ENCODE measurements at regions of chr14 and their contacts with region 1.

Region 1: DNA sequence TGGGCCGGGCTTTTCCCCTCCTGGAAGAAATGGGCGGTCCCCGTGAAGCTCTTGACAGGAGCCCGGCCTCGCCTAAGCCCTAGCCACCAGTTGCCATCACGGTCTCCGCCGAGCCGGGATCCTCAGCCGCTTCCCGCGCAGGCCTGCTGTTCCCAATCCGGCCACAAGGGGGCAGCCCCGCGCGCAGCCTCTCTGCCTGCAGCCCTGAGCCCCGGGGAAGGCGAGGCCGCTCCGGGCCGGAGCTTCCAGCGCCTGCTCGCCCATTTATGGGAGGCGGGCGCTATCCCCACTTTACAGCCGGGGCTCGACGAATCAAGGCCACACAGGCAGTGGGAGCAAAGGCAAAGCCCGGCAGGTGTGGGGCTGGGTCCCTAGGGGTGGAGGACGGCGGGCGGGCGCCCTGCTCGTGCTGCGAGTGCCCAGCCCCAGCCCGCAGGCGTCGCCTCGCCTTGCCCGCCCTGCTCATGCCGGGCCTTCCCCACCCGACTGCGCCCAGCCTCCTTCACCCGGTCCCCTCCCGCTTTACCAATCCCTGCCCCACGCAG is 61.5 kb downstream of the LGMN start:
- DNase-seq: no peak
- H3K4me3 ChIP-seq: peak overlapping the region; percentile 30; the same call in 1 of the 2 replicates
- CTCF ChIP-seq: peak; percentile 99

Region 2: GRCh38 chr14:92135267-92135666 is 551.7 kb before region 1 on chr14:
- CTCF ChIA-PET with region 1: interaction called, 27 read pairs
- POLR2A ChIA-PET with region 1: no interaction called
- DNase-seq: no peak
- H3K4me3 ChIP-seq: no peak overlapping the region
- CTCF ChIP-seq: peak; percentile 33

Region 3: GRCh38 chr14:92563359-92563758 is 123.6 kb before region 1 on chr14:
- CTCF ChIA-PET with region 1: interaction called, 16 read pairs
- POLR2A ChIA-PET with region 1: no interaction called
- DNase-seq: no peak
- H3K4me3 ChIP-seq: no peak overlapping the region
- CTCF ChIP-seq: no peak

Region 4: DNA sequence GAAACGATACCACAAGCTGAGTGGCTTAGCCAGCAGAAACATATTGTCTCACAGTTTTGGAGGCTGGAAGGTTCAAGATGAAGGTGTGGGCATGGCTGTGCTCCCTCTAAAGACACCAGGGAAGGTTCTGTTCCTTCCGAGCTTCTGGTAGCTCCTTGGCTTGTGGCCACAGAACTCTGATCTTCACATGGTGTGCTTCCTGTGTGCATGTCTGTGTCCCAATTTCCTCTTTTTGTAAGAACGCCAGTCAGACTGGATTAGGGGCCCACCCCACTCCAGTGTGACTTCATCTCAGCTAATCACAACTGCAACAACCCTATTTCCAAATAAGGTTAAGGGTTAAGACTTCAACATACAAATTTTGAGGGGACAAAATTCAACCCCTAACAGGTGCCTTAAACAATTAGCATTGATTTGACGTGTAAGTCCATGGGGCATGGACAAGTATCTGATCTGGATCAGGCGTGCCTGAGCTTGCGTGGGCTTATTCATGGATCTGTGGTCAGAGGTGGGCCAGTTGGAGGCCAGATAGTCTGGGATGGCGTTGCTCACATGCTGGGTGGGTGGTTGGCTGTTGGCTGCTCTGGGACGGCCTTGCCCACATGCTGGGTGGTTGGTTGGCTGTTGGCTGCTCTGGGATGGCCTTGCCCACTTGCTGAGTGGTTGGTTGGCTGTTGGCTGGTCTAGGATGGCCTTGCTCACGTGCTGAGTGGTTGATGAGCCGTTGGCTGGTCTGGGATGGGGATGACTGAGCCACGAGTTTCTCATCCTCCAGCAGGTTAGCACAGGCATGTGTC is 27.0 kb before region 1 on chr14:
- CTCF ChIA-PET with region 1: interaction called, 11 read pairs
- POLR2A ChIA-PET with region 1: no interaction called
- DNase-seq: no peak
- H3K4me3 ChIP-seq: no peak overlapping the region
- CTCF ChIP-seq: no peak

Region 5: DNA sequence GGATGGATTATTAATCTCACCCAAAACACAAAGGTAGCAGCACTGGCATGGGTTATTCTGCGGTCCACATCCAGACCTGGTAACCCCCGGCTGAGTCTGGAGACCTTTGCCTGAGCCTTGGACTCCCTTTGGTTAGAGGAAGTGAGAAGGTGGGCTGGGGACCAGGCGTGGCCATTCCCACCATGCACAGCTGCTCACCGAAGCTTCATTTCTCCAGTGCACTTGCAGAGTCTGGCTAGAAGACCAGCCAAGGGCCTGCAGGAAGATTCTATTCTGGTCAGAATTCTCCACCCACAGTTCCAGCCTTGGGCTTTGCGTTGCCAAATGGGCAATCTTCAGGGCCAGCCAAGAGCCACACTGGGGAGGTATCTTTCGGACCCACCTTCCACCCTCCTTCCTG is 11.6 kb before region 1 on chr14:
- CTCF ChIA-PET with region 1: interaction called, 27 read pairs
- POLR2A ChIA-PET with region 1: interaction called, 3 read pairs
- DNase-seq: no peak
- H3K4me3 ChIP-seq: no peak overlapping the region
- CTCF ChIP-seq: no peak

Region 6: GRCh38 chr14:92748259-92749016 is 61.5 kb after region 1 on chr14 and contains the start of gene LGMN:
- CTCF ChIA-PET with region 1: interaction called, 14 read pairs
- POLR2A ChIA-PET with region 1: interaction called, 3 read pairs
- DNase-seq: peak; percentile 66
- H3K4me3 ChIP-seq: peak within 1 kb of the TSS; percentile 85
- CTCF ChIP-seq: no peak

Region 7: GRCh38 chr14:92800012-92800411 is 113.0 kb after region 1 on chr14:
- CTCF ChIA-PET with region 1: interaction called, 16 read pairs
- POLR2A ChIA-PET with region 1: no interaction called
- DNase-seq: no peak
- H3K4me3 ChIP-seq: no peak overlapping the region
- CTCF ChIP-seq: no peak

Measured in AG04449 (cell line).